ENCODE measurements at regions of chr14 and their contacts with region 1.

Region 1: GRCh38 chr14:51846631-51847488 is 13.6 kb upstream of the GNG2 start:
- DNase-seq: peak; percentile 66 to 98 (median 82)
- ATAC-seq: peak; percentile 83
- H3K4me3 ChIP-seq: peak overlapping the region; percentile 53
- H3K4me3 Mint-ChIP-seq: peak overlapping the region; percentile 86
- H3K27ac ChIP-seq: peak overlapping the region; percentile 99 to 100
- H3K27ac Mint-ChIP-seq: peak overlapping the region; percentile 98
- H3K4me1 ChIP-seq: peaks cover 44% of the 10 kb centered on the region
- H3K4me1 Mint-ChIP-seq: peaks cover 72% of the 10 kb centered on the region
- H3K27me3 ChIP-seq: no peaks in the 10 kb centered on the region
- H3K27me3 Mint-ChIP-seq: no peaks in the 10 kb centered on the region
- CTCF ChIP-seq: no peak

Region 2: DNA sequence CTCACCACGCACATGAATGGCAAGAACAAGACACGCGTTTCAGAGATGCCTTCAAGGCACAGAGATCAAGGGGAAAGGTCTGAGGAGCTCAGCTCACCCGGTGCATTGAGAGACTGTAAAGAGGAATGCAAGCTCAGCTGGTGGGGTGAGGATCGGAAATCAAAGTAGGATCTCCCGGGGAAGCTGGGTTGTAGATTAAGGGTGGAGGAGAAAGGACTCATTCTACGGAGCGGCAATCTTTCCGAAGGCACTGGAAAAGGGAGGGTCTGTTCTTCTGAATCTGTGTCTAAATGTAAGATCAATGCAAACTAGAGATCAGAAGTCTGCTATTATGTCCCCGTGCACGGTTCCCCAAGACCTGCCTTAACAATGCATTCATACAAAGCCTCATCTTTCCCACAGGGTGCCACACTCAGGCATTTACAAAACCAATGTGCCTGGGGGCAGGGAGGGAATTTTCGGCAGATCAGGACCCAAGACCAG is 861.0 kb before region 1 on chr14:
- CTCF ChIA-PET with region 1: no interaction called
- POLR2A ChIA-PET with region 1: no interaction called
- intact Hi-C with region 1: no loop called
- DNase-seq: no peak
- ATAC-seq: no peak
- H3K4me3 ChIP-seq: no peak overlapping the region
- H3K4me3 Mint-ChIP-seq: no peak overlapping the region
- H3K27ac ChIP-seq: no peak overlapping the region
- H3K27ac Mint-ChIP-seq: no peak overlapping the region
- H3K4me1 ChIP-seq: no peaks in the 10 kb centered on the region
- H3K4me1 Mint-ChIP-seq: no peaks in the 10 kb centered on the region
- H3K27me3 ChIP-seq: no peaks in the 10 kb centered on the region
- H3K27me3 Mint-ChIP-seq: no peaks in the 10 kb centered on the region
- CTCF ChIP-seq: no peak

Region 3: DNA sequence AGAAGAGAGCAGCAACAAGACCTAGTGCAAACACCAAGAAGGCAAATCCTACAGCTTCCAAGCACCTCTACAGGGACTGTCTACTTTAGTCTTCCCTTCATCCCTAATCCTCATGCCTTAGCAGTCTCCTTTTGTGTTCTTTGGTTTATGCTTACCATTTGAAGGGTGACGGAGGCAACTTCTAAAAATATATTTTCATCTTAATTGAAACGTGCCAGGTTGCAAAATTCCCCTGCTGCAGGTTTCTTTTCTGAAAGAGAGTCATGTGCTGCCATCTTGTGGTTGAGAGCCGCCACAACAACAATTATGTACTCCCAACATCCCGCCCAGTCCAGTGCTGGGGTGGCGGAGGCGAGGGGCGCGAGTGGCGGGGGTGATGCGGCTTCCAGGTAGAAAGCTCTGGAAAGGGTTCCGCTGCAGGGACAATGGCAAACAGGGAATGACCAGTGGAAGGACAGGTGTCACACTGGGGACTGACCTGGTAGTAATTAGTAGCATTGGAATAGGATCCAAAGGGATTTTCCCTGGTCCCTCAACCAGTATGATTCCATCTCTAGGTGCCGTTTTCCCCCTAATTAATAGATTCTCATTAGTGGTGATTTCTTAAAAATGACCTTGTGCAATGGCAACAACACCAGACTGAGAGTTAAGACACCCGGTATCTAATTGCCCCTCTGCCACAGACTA is 66.7 kb before region 1 on chr14:
- CTCF ChIA-PET with region 1: interaction called, 3 read pairs
- POLR2A ChIA-PET with region 1: no interaction called
- intact Hi-C with region 1: loop called (anchors 2 to 5 kb)
- DNase-seq: peak; percentile 51 to 87 (median 65)
- ATAC-seq: peak; percentile 71
- H3K4me3 ChIP-seq: no peak overlapping the region
- H3K4me3 Mint-ChIP-seq: no peak overlapping the region
- H3K27ac ChIP-seq: no peak overlapping the region
- H3K27ac Mint-ChIP-seq: no peak overlapping the region
- H3K4me1 ChIP-seq: peaks cover 13% of the 10 kb centered on the region
- H3K4me1 Mint-ChIP-seq: peaks cover 28% of the 10 kb centered on the region
- H3K27me3 ChIP-seq: peaks cover 0 to 3% of the 10 kb centered on the region in 2 experiments
- H3K27me3 Mint-ChIP-seq: peaks cover 12% of the 10 kb centered on the region
- CTCF ChIP-seq: peak; percentile 87

Region 4: GRCh38 chr14:51860164-51860824 is 13.4 kb after region 1 on chr14 and contains the start of gene GNG2:
- CTCF ChIA-PET with region 1: interaction called, 33 read pairs
- POLR2A ChIA-PET with region 1: interaction called, 156 read pairs
- intact Hi-C with region 1: loop called (anchors 1 to 2 kb)
- DNase-seq: peak; percentile 68 to 94 (median 78)
- ATAC-seq: peak; percentile 97
- H3K4me3 ChIP-seq: peak within 1 kb of the TSS; percentile 83
- H3K4me3 Mint-ChIP-seq: peak within 1 kb of the TSS; percentile 93
- H3K27ac ChIP-seq: peak within 1 kb of the TSS; percentile 80 to 88
- H3K27ac Mint-ChIP-seq: peak within 1 kb of the TSS; percentile 96
- H3K4me1 ChIP-seq: peaks cover 32% of the 10 kb centered on the region
- H3K4me1 Mint-ChIP-seq: peaks cover 69% of the 10 kb centered on the region
- H3K27me3 ChIP-seq: no peaks in the 10 kb centered on the region
- H3K27me3 Mint-ChIP-seq: no peaks in the 10 kb centered on the region
- CTCF ChIP-seq: no peak
- total RNA-seq, gene GNG2: 138 to 139 TPM

Region 5: DNA sequence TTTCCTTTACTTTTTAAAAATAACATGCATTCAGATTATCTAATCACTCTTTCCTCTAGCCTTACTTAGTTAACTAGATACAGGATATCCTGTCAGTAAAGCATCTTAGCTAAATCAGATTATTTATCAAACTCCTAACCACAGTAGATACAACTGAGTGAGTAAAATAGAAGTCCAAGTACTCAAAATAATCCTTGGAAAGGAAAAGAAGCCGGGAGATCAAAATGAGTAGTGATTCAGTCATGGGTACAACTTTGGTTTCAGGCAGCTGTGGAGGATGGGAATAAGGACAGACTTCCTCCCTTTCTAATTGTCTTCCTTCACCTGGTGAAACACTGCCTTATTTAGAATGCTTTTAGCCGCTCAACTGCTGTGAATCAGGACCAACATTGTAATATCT is 43.0 kb after region 1 on chr14:
- CTCF ChIA-PET with region 1: interaction called, 6 read pairs
- POLR2A ChIA-PET with region 1: interaction called, 7 read pairs
- intact Hi-C with region 1: loop called in 1 of 2 experiments (anchors 2 kb)
- DNase-seq: peak in 1 of 14 experiments; percentile 53
- ATAC-seq: peak; percentile 79
- H3K4me3 ChIP-seq: no peak overlapping the region
- H3K4me3 Mint-ChIP-seq: peak overlapping the region; percentile 70
- H3K27ac ChIP-seq: peak overlapping the region in 1 of 2 donors; percentile 39
- H3K27ac Mint-ChIP-seq: peak overlapping the region; percentile 34
- H3K4me1 ChIP-seq: peaks cover 11% of the 10 kb centered on the region
- H3K4me1 Mint-ChIP-seq: peaks cover 89% of the 10 kb centered on the region
- H3K27me3 ChIP-seq: no peaks in the 10 kb centered on the region
- H3K27me3 Mint-ChIP-seq: no peaks in the 10 kb centered on the region
- CTCF ChIP-seq: no peak

Region 6: GRCh38 chr14:51922624-51923023 is 75.8 kb after region 1 on chr14:
- CTCF ChIA-PET with region 1: no interaction called
- POLR2A ChIA-PET with region 1: no interaction called
- intact Hi-C with region 1: loop called in 1 of 2 experiments (anchors 5 kb)
- DNase-seq: no peak
- ATAC-seq: peak; percentile 20
- H3K4me3 ChIP-seq: no peak overlapping the region
- H3K4me3 Mint-ChIP-seq: peak overlapping the region; percentile 43
- H3K27ac ChIP-seq: no peak overlapping the region
- H3K27ac Mint-ChIP-seq: peak overlapping the region; percentile 15
- H3K4me1 ChIP-seq: peaks cover 7% of the 10 kb centered on the region
- H3K4me1 Mint-ChIP-seq: peaks cover 75% of the 10 kb centered on the region
- H3K27me3 ChIP-seq: no peaks in the 10 kb centered on the region
- H3K27me3 Mint-ChIP-seq: no peaks in the 10 kb centered on the region
- CTCF ChIP-seq: no peak

Region 7: GRCh38 chr14:51979088-51979709 is 132.3 kb after region 1 on chr14:
- CTCF ChIA-PET with region 1: interaction called, 10 read pairs
- POLR2A ChIA-PET with region 1: interaction called, 16 read pairs
- intact Hi-C with region 1: loop called (anchors 1 to 5 kb)
- DNase-seq: peak; percentile 66 to 90 (median 80)
- ATAC-seq: peak; percentile 91
- H3K4me3 ChIP-seq: no peak overlapping the region
- H3K4me3 Mint-ChIP-seq: no peak overlapping the region
- H3K27ac ChIP-seq: no peak overlapping the region
- H3K27ac Mint-ChIP-seq: no peak overlapping the region
- H3K4me1 ChIP-seq: peaks cover 8% of the 10 kb centered on the region
- H3K4me1 Mint-ChIP-seq: peaks cover 7% of the 10 kb centered on the region
- H3K27me3 ChIP-seq: no peaks in the 10 kb centered on the region
- H3K27me3 Mint-ChIP-seq: no peaks in the 10 kb centered on the region
- CTCF ChIP-seq: peak; percentile 98

Measured in CD4-positive, alpha-beta T cell (primary cell).